Activated naive CD8-positive, alpha-beta T cell treated with anti-CD3 and anti-CD28 coated beads, Interleukin-2, amount 10 ng/mL, durations not matched to agents 7 days and 5 days (primary cell): ENCODE measurements at regions of chr4 and their contacts with region 1.

Region 1: DNA sequence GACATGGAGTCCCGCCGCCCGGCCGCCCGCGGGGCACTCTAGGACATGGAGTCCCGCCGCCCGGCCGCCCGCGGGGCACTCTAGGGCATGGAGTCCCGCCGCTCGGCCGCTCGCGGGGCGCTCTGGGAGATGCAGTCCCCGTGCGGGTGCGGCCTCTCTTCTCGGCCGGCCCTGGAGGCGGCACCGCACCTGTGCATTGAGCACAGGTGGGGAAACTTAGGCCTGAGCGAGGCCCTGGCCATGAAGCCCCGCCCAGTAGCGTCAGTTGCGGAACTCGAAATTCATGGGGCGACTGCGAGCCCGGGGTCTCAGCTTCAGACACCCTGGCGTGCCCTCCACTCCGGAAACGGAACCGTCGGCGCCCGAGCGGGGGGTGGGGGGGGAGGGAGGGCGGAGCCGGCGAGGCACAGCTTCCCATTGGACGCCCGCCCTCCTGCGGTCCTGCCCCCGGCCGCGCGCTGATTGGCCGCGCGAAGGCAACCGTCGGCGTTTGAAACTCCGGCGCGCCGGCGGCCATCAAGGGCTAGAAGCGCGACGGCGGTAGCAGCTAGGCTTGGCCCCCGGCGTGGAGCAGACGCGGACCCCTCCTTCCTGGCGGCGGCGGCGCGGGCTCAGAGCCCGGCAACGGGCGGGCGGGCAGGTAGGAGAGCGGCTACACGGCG is at the starts of genes TACC3 and TMEM129:
- DNase-seq: peak; percentile 92
- ATAC-seq: peak; percentile 86
- H3K4me3 Mint-ChIP-seq: peak within 1 kb of the TSS; percentile 99
- H3K27ac Mint-ChIP-seq: peak within 1 kb of the TSS; percentile 98
- H3K4me1 Mint-ChIP-seq: peaks cover 36% of the 10 kb centered on the region
- H3K27me3 Mint-ChIP-seq: no peaks in the 10 kb centered on the region
- total RNA-seq, gene TACC3: 234 to 235 TPM
- total RNA-seq, gene TMEM129: 27.5 to 27.6 TPM

Region 2: DNA sequence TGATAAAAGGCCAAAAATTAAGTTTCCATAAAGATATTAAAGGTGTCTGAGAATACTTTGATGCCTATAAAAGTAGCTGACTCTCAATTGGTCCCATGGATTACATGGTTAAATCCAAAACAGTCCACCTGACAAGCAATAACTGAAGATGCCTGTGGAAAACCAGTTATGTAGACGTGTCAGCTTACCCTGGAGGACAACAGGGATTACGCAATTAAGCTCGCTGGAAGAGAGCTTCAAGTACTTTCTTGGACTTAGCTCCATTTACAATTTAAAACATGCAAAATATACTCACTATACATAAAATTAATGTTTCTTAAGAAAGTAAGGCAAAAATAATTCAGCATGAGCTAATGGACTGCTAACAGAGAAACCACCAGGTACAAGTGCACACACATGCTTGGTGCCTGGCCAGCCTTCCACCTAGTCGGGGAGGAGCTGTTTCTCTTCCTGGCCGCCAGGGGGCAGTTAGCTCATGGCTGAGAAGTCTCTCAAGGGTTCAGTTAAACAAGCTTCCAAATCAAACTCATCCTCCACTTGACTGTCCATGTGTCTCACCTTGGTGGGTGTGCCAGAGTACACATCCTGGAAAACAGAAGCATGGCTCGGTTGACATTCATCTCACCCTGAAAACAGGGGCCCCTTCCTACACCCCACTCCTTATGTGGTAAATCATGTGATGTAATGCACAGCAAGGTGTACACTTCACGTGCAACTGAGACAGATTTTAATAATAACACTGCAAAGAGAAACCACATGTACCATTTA is 27.8 kb before region 1 on chr4:
- POLR2A ChIA-PET with region 1: interaction called, 49 read pairs
- DNase-seq: peak; percentile 78
- ATAC-seq: peak; percentile 93
- H3K4me3 Mint-ChIP-seq: no peak overlapping the region
- H3K27ac Mint-ChIP-seq: peak overlapping the region; percentile 49
- H3K4me1 Mint-ChIP-seq: peaks cover 3% of the 10 kb centered on the region
- H3K27me3 Mint-ChIP-seq: no peaks in the 10 kb centered on the region

Region 3: DNA sequence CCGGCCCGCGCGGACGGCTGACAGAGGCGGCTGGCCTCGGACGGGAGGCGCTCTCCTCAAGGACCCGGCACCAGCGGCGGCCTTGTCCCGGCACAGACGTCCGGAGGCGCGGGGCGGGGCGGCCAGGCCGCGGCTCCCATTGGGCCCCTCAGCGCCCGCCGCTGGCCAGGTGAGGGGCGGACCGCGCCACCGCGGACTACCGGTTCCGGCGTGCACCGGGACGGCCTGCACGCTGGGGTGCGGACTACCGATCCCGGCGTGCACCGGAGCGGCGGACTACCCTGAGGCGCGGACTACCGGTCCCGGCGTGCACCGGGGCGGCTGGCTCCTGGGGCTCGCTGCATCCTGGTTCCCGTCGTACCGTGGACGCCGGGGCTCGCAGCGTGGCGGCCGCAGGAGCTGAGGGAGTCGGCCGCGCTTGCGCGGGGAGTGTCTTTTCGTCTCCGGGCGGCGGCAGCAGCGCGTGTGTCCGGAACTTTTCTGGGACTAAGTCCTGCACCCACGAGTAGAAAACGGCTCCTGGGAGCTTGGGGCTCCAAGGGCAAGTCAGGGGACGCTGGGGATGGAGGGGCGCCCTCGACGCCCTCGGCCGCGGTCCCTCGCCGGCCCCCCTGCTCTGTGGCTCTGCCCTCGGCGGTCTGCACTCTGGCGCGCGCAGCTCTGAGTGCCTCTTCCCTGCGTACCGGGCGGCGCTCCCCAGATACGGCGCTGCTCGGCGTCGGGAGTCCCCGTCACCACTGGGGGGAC is 135.1 kb after region 1 on chr4 and contains the start of gene LETM1:
- POLR2A ChIA-PET with region 1: interaction called, 13 read pairs
- DNase-seq: peak; percentile 94
- ATAC-seq: peak; percentile 96
- H3K4me3 Mint-ChIP-seq: peak within 1 kb of the TSS; percentile 85
- H3K27ac Mint-ChIP-seq: peak within 1 kb of the TSS; percentile 78
- H3K4me1 Mint-ChIP-seq: peaks cover 28% of the 10 kb centered on the region
- H3K27me3 Mint-ChIP-seq: no peaks in the 10 kb centered on the region
- total RNA-seq, gene LETM1: 44.0 to 45.8 TPM